Gastrocnemius medialis (tissue), 4 donors: ENCODE measurements at regions of chr6 and their contacts with region 1.

Region 1: GRCh38 chr6:56843573-56844349 is 111.1 kb upstream of the BEND6 start:
- DNase-seq: peak; percentile 74 to 89
- ATAC-seq: peak; percentile 64 to 66
- H3K4me3 ChIP-seq: peak overlapping the region; percentile 64 to 90 (median 89)
- H3K27ac ChIP-seq: peak overlapping the region; percentile 85 to 98 (median 98)
- H3K4me1 ChIP-seq: peaks cover 31 to 41% of the 10 kb centered on the region in 2 donors
- H3K27me3 ChIP-seq: no peaks in the 10 kb centered on the region
- CTCF ChIP-seq: peak; percentile 71 to 86 (median 79)
- POLR2A ChIP-seq: peak; percentile 90 to 94

Region 2: GRCh38 chr6:56693246-56693607 is 150.5 kb before region 1 on chr6:
- in situ Hi-C with region 1: loop called in 1 of 4 experiments (anchors 10 kb)
- intact Hi-C with region 1: loop called (anchors 5 kb)
- DNase-seq: peak; percentile 81 to 90
- ATAC-seq: peak; percentile 80 to 86
- H3K4me3 ChIP-seq: peak overlapping the region; percentile 46 to 56 (median 50)
- H3K27ac ChIP-seq: peak overlapping the region; percentile 89 to 96 (median 94)
- H3K4me1 ChIP-seq: peaks cover 54 to 57% of the 10 kb centered on the region in 2 donors
- H3K27me3 ChIP-seq: no peaks in the 10 kb centered on the region
- CTCF ChIP-seq: no peak
- POLR2A ChIP-seq: peak in 1 of 2 donors; percentile 31

Region 3: DNA sequence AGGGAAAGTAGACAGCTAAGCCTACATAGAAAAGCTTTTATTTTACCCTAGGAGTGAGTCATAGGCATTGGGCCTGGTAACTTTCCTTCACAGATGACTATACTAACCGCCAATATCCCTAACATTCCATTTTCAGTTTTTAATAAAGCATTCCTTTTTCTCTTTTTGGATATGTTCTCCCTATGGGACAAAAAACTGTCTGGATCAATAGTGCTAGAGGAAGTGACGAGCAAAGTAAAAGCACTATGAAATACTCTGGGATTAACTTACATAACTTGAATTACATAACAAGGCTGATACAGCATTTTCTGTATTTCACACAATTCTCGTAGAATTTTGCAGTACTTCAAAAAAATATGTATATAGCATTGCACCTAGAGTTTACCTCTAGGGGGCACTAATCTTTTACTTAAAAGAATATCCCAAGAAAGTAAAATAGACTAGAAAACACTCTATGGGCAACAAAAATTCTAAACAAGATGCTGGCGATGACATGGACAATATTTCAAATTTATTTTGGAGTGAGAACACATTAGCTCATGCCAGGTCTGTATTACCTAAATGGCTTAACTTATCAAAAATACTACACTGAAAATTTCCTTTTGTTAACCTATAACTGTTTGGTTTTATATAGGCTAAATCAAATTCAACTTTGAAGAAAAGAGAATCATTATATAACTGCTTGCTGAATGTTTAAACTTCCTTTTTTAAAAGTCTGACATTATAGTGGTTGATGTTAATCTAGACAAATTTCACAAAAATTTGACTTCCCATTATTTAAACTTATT is 134.8 kb before region 1 on chr6:
- in situ Hi-C with region 1: loop called in 3 of 4 experiments (anchors 5 to 10 kb)
- intact Hi-C with region 1: no loop called
- DNase-seq: no peak
- ATAC-seq: peak in 1 of 2 donors; percentile 21
- H3K4me3 ChIP-seq: no peak overlapping the region
- H3K27ac ChIP-seq: peak overlapping the region; percentile 16 to 37 (median 29)
- H3K4me1 ChIP-seq: peaks cover 43 to 44% of the 10 kb centered on the region in 2 donors
- H3K27me3 ChIP-seq: no peaks in the 10 kb centered on the region
- CTCF ChIP-seq: peak; percentile 59 to 79 (median 70)
- POLR2A ChIP-seq: no peak

Region 4: DNA sequence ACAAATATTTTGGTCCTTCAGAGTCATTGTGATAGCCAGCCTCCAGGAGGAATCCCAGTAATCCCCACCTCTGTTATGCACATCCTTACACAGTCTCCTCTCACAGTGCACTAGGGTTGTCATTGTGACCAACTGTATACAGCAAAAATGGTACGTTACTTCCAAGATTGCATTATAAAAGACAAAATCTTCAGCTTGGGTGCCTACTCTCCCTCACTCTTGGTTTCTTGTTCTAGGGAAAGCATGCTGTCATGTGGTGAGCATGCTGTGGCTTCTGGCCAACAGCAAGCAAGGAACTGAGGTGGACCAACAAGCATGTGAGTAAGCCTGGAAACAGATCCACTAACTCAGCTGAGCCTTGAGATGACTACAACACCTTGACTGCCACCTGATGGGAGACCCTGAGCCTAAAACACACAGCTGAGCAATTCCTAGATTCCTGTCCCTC is 71.0 kb before region 1 on chr6:
- in situ Hi-C with region 1: loop called (anchors 5 to 10 kb)
- intact Hi-C with region 1: loop called (anchors 1 kb)
- DNase-seq: peak; percentile 73 to 89
- ATAC-seq: peak; percentile 95 to 96
- H3K4me3 ChIP-seq: peak overlapping the region in 1 of 4 donors; percentile 22
- H3K27ac ChIP-seq: peak overlapping the region; percentile 85 to 88 (median 86)
- H3K4me1 ChIP-seq: peaks cover 42 to 73% of the 10 kb centered on the region in 2 donors
- H3K27me3 ChIP-seq: no peaks in the 10 kb centered on the region
- CTCF ChIP-seq: no peak
- POLR2A ChIP-seq: no peak

Region 5: DNA sequence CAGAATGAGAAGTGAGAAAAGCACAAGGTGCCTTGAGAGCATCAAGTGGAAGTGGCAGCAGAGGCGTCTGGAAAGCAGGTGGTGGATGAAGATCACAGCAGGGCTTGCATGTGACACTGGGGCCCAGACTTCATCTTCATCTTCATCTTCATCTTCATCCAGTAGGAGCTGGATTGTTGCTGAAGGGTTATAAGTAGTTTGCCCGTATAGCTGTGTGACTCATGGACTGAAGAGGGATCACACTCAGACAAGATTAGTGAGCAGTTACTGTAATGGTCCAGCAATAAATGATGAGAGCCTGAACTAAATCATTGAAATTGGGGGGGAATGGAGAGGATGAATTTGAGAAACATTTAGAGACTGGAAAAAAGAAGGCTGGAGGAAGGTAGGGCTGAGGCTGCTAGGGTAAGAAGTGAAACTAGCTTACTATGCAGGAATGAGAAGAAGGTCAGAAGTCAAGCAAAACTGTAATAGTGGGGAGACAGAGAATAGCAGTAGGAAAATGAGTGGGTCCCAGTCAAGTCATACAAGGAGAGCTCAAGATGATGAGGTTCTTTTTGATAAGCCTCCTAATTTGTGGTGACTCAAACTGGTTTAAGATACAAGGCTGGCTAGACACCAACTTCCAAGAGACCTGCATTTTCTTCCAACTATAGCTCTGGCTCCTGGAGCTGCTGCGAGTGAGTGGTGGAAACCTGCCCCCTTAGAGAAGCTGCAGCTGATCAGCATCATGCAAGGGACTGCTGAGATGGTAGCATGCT is 18.8 kb after region 1 on chr6:
- in situ Hi-C with region 1: no loop called
- intact Hi-C with region 1: no loop called
- DNase-seq: no peak
- ATAC-seq: no peak
- H3K4me3 ChIP-seq: no peak overlapping the region
- H3K27ac ChIP-seq: no peak overlapping the region
- H3K4me1 ChIP-seq: no peaks in the 10 kb centered on the region
- H3K27me3 ChIP-seq: no peaks in the 10 kb centered on the region
- CTCF ChIP-seq: no peak
- POLR2A ChIP-seq: no peak

Region 6: GRCh38 chr6:56916806-56917551 is 73.2 kb after region 1 on chr6:
- in situ Hi-C with region 1: no loop called
- intact Hi-C with region 1: no loop called
- DNase-seq: no peak
- ATAC-seq: no peak
- H3K4me3 ChIP-seq: no peak overlapping the region
- H3K27ac ChIP-seq: no peak overlapping the region
- H3K4me1 ChIP-seq: peaks cover 3 to 5% of the 10 kb centered on the region in 2 donors
- H3K27me3 ChIP-seq: no peaks in the 10 kb centered on the region
- CTCF ChIP-seq: no peak
- POLR2A ChIP-seq: no peak

Region 7: DNA sequence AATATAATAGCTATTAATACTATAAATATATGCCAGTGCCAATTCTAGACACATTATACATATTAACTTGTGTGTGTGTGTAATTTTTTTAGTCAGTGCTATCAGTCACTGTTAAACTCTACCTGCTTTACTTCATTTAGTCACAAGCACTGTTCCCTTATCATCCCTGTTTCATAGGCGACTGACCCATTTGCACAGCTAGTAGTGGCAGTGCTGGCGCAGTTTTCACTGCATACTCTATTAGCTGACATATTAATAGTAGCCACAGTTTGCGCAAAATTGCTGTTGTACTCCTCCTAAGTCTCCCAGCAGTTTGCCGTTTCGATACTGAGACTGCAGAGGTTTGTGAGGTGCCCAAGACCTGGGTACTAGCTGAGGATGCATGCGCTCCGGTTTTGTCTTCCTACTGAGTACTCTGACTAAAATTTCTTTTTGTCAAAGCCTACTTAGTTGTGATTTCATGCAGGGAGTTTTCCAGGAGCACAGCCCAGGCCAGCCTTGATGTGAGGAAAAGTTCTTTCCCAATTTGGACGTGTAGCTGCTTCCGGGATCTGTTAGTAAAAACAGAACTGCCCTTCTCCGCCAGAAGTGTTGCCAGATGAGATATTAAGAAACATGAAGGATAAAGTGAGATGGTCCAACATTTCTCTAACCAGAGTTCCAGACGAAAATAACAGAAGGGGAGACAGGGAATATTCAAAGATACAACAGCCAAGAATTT is 333.9 kb after region 1 on chr6:
- in situ Hi-C with region 1: no loop called
- intact Hi-C with region 1: loop called (anchors 5 kb)
- DNase-seq: peak; percentile 27 to 65
- ATAC-seq: peak; percentile 64 to 68
- H3K4me3 ChIP-seq: peak overlapping the region; percentile 33 to 43 (median 34)
- H3K27ac ChIP-seq: peak overlapping the region; percentile 65 to 95 (median 86)
- H3K4me1 ChIP-seq: peaks cover 70 to 78% of the 10 kb centered on the region in 2 donors
- H3K27me3 ChIP-seq: no peaks in the 10 kb centered on the region
- CTCF ChIP-seq: no peak
- POLR2A ChIP-seq: no peak